ENCODE measurements at regions of chr12 and their contacts with region 1.

Region 1: DNA sequence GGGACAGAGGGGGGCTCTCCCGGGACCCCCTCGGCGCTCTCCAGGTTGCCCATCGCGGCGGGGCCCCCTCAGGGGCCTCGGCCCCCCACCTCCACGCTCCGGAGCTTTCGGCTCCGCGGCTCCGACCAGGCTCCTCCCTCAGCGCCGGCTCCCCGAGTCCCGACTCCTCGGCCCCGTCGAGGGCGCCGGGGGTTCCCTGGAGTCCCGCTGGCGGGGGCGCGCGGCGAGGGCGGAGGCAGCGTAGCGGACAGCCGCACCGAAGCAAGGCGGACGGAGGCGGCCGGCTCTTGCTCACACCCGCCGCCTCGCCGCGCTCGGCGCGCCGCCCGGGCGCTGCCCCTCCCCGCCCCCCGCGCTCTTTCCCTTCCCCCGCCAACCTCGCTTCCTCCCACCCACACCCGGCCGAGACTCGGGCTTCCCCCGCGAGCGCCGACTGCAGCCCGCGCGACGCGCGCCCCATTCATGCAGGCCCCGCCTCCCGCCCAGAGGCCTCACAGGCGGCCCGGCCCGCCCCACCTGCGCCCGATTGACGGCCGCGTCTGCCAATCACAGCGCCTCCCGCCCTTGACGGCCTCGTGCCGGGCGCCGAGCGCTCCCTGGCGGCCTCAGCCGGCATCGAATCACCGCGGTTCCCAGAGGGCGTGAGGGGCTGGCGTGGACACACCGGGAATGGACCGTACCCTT is at the start of gene FMNL3:
- DNase-seq: peak; percentile 98 to 100 (median 100)
- ATAC-seq: peak; percentile 96
- H3K4me3 ChIP-seq: peak within 1 kb of the TSS; percentile 73
- H3K27ac ChIP-seq: peak within 1 kb of the TSS; percentile 79
- H3K4me1 ChIP-seq: peaks cover 14 to 41% of the 10 kb centered on the region in 2 experiments
- H3K27me3 ChIP-seq: no peaks in the 10 kb centered on the region
- CTCF ChIP-seq: peak; percentile 93 to 98 (median 96)
- EP300 ChIP-seq: no peak
- POLR2A ChIP-seq: peak; percentile 41; the same call in 1 of the 2 replicates
- RAD21 ChIP-seq: peak; percentile 100
- polyA plus RNA-seq, gene FMNL3: 0.49 to 0.53 TPM

Region 2: DNA sequence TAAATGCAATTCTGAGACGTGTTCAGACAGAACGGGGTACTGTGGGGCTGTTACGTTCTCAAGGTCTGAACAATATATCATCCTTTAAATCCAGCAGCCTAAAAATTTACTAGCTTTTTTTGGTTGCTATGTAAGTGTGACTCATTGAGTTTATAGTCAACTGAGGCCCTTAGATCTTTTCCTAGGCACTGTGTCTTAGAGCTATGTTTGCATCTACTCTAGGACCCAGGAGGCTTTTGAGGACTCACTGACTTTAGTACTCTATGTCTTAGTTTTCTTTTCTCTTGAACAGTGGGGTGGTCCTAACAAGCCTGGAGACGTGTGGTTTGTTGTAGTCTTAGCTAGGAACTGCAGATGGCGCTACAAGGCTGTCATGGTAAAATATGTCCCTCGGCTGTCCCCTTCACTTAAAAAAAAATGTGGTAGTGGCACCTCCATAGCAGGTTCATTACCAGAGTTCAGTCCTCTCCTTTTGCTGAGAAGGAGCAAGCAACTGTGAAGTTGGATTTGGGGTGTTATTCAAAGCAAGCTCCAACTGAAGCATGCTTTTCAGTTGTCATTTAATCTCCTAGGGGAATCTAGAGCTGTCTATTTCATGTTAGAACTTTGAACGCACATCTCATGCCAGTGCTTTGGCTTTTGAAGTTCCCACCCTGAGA is 348.7 kb before region 1 on chr12:
- CTCF ChIA-PET with region 1: no interaction called
- POLR2A ChIA-PET with region 1: no interaction called
- in situ Hi-C with region 1: no loop called
- intact Hi-C with region 1: loop called (anchors 10 kb)
- DNase-seq: peak; percentile 69 to 86 (median 72)
- ATAC-seq: peak; percentile 96
- H3K4me3 ChIP-seq: no peak overlapping the region
- H3K27ac ChIP-seq: no peak overlapping the region
- H3K4me1 ChIP-seq: no peaks in the 10 kb centered on the region
- H3K27me3 ChIP-seq: no peaks in the 10 kb centered on the region
- CTCF ChIP-seq: peak; percentile 80 to 94 (median 90)
- EP300 ChIP-seq: no peak
- POLR2A ChIP-seq: no peak
- RAD21 ChIP-seq: peak; percentile 98

Region 3: GRCh38 chr12:49440035-49440434 is 267.2 kb before region 1 on chr12:
- CTCF ChIA-PET with region 1: no interaction called
- POLR2A ChIA-PET with region 1: no interaction called
- in situ Hi-C with region 1: no loop called
- intact Hi-C with region 1: no loop called
- DNase-seq: no peak
- ATAC-seq: no peak
- H3K4me3 ChIP-seq: no peak overlapping the region
- H3K27ac ChIP-seq: no peak overlapping the region
- H3K4me1 ChIP-seq: no peaks in the 10 kb centered on the region; a peak in 1 of 5 replicates
- H3K27me3 ChIP-seq: no peaks in the 10 kb centered on the region
- CTCF ChIP-seq: no peak
- EP300 ChIP-seq: no peak
- POLR2A ChIP-seq: no peak
- RAD21 ChIP-seq: no peak

Region 4: GRCh38 chr12:49507139-49507538 is 200.1 kb before region 1 on chr12:
- CTCF ChIA-PET with region 1: no interaction called
- POLR2A ChIA-PET with region 1: no interaction called
- in situ Hi-C with region 1: no loop called
- intact Hi-C with region 1: no loop called
- DNase-seq: no peak
- ATAC-seq: no peak
- H3K4me3 ChIP-seq: no peak overlapping the region
- H3K27ac ChIP-seq: no peak overlapping the region
- H3K4me1 ChIP-seq: no peaks in the 10 kb centered on the region
- H3K27me3 ChIP-seq: no peaks in the 10 kb centered on the region
- CTCF ChIP-seq: no peak
- EP300 ChIP-seq: no peak
- POLR2A ChIP-seq: no peak
- RAD21 ChIP-seq: no peak

Region 5: DNA sequence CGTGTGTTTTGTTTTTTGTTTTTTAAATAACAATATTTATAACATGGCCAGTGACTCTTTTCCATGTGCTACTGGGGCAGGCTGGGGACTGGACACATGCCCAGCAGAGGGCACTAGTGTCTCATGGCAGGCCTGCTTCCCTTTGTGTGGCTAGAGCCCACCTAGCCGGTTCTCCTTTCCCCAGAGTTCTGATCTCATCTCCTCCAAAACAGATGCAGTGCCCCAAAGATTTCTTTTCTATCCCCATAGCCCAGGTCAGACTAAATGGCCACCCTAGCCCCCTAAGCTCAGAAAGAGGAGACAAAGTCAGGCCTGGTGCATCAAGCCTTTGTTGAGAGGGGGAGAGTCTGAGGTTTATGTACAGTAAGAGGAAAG is 62.7 kb before region 1 on chr12:
- CTCF ChIA-PET with region 1: interaction called, 66 read pairs
- POLR2A ChIA-PET with region 1: interaction called, 11 read pairs
- in situ Hi-C with region 1: loop called (anchors 5 kb)
- intact Hi-C with region 1: loop called (anchors 1 kb)
- DNase-seq: peak; percentile 83 to 91 (median 87)
- ATAC-seq: peak; percentile 95
- H3K4me3 ChIP-seq: no peak overlapping the region
- H3K27ac ChIP-seq: 0 out of 3 replicates have a peak overlapping the region, but pooled peaks have one; percentile 25
- H3K4me1 ChIP-seq: peaks cover 0 to 16% of the 10 kb centered on the region in 2 experiments; a peak in 3 of 5 replicates
- H3K27me3 ChIP-seq: no peaks in the 10 kb centered on the region
- CTCF ChIP-seq: peak; percentile 95 to 96 (median 96)
- EP300 ChIP-seq: no peak
- POLR2A ChIP-seq: no peak
- RAD21 ChIP-seq: peak; percentile 99

Region 6: GRCh38 chr12:49687941-49688340 is 19.3 kb before region 1 on chr12:
- CTCF ChIA-PET with region 1: no interaction called
- POLR2A ChIA-PET with region 1: interaction called, 26 read pairs
- in situ Hi-C with region 1: no loop called
- intact Hi-C with region 1: no loop called
- DNase-seq: no peak
- ATAC-seq: peak; percentile 80
- H3K4me3 ChIP-seq: no peak overlapping the region
- H3K27ac ChIP-seq: no peak overlapping the region
- H3K4me1 ChIP-seq: peaks cover 0 to 7% of the 10 kb centered on the region in 2 experiments; a peak in 2 of 5 replicates
- H3K27me3 ChIP-seq: no peaks in the 10 kb centered on the region
- CTCF ChIP-seq: peak; percentile 11 to 85 (median 28); a peak in 4 of 6 replicates
- EP300 ChIP-seq: no peak
- POLR2A ChIP-seq: no peak
- RAD21 ChIP-seq: no peak

Region 7: GRCh38 chr12:49740930-49741881 is 33.9 kb after region 1 on chr12 and contains the start of gene TMBIM6:
- CTCF ChIA-PET with region 1: no interaction called
- POLR2A ChIA-PET with region 1: interaction called, 20 read pairs
- in situ Hi-C with region 1: no loop called
- intact Hi-C with region 1: loop called (anchors 2 kb)
- DNase-seq: peak; percentile 96 to 100 (median 96)
- ATAC-seq: peak; percentile 96
- H3K4me3 ChIP-seq: peak within 1 kb of the TSS; percentile 71
- H3K27ac ChIP-seq: peak within 1 kb of the TSS; percentile 99
- H3K4me1 ChIP-seq: peaks cover 10 to 18% of the 10 kb centered on the region in 2 experiments
- H3K27me3 ChIP-seq: no peaks in the 10 kb centered on the region
- CTCF ChIP-seq: peak; percentile 91 to 99 (median 96)
- EP300 ChIP-seq: peak; percentile 48
- POLR2A ChIP-seq: peak; percentile 100
- RAD21 ChIP-seq: peak; percentile 49 to 66
- polyA plus RNA-seq, gene TMBIM6: 1,205 to 1,288 TPM